ENCODE measurements at regions of chr10 and their contacts with region 1.

Region 1: DNA sequence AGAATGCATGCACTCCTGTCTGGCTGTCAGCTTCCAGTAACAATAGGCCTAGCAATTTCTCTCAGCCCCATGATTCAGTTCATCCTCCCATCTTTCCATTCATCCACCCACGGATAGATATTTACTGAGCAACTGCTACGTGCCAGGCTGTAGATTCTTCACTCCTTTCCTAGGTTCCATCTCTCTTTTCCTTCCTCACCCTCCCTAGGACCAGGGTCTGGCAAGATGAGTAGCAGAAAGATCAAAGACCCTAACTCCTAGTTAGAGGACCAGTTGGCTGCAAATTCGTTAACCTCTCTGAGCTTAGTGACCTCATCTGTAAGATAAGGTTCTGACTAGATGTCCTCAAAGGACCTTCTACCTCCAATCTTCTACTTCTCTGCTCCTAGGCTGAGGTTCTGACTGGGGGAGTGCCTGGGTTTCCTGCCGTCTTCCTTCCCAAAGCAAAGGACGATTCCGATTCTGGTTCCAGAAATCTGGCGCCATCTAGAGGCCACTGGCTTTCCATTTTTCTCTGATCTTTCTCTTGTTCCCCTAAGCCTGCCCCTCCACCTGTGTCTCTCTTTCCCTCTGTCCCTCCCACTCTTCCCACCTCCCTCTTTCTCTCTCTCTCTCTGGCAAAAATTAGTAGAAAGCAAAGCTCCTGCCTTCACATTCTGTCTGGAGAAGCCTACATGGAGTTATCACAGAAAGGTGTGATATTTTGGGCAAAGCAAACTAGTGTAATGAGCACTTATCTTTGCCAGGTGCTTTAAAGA is 26.2 kb downstream of the TBATA start:
- DNase-seq: peak; percentile 45
- H3K4me3 Mint-ChIP-seq: no peak overlapping the region
- H3K27ac Mint-ChIP-seq: no peak overlapping the region
- H3K4me1 Mint-ChIP-seq: peaks cover 6% of the 10 kb centered on the region
- H3K27me3 Mint-ChIP-seq: no peaks in the 10 kb centered on the region

Region 2: DNA sequence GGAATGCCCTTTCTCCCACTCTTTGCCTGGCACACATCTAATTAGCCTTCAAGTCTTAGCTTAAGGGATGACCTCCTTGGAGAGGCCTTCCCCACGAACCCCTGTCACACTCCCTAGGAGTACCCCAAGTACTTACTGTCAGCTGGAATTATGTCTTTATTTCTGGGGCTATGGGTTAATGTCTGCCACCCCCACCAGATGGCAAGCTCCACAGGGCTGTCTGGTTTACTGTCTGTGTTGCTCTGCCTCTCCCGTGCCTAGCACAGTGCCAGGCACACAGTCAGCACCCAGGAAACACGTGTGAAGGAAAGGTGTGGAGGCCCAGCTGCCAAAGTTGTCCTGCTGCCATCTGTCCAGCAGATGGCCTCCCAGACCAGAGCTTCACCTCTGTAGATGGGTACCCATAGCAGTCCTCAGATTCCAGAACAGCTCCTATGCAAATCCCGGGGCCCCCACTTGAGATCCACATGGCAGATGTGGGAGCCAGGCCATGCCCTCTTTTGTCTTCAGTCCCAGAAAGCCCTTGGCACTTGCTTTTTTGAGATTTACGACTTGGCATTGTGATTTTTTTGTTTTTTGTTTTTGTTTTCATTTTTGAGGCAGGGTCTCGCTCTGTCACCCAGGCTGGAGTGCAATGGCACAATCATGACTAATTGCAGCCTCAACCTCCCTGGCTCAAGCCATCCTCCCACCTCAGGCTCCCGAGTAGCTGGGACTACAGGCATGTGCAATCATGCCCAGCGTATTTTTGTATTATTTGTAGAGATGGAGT is 297.5 kb before region 1 on chr10:
- intact Hi-C with region 1: loop called (anchors 10 kb)
- DNase-seq: no peak
- H3K4me3 Mint-ChIP-seq: no peak overlapping the region
- H3K27ac Mint-ChIP-seq: no peak overlapping the region
- H3K4me1 Mint-ChIP-seq: no peaks in the 10 kb centered on the region
- H3K27me3 Mint-ChIP-seq: peaks cover 38% of the 10 kb centered on the region

Region 3: DNA sequence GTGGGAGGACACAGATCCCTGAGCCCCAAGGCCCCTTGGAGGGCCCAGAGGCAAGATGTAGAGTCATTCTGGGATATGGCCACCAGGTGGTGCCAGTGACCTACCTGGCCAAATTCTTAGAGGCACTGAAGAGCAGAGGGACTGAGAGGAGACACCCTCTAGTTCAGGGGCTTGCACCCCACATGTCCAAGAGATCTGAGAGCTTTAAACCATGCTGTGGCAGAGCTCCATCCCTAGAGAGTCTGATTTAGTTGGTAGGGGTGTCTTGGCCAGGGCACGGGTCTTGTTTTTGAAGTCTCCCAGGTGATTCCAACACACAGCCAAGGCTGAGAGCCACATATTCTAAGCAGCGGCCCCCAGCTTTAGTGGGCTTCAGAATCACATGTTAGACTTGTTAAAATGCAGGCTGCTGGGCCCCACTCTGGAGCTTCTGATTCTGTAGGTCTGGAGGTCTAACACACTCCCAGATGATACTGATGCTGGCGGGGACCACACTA is 208.9 kb before region 1 on chr10:
- intact Hi-C with region 1: loop called (anchors 1 kb)
- DNase-seq: peak; percentile 56
- H3K4me3 Mint-ChIP-seq: no peak overlapping the region
- H3K27ac Mint-ChIP-seq: no peak overlapping the region
- H3K4me1 Mint-ChIP-seq: no peaks in the 10 kb centered on the region
- H3K27me3 Mint-ChIP-seq: no peaks in the 10 kb centered on the region

Region 4: DNA sequence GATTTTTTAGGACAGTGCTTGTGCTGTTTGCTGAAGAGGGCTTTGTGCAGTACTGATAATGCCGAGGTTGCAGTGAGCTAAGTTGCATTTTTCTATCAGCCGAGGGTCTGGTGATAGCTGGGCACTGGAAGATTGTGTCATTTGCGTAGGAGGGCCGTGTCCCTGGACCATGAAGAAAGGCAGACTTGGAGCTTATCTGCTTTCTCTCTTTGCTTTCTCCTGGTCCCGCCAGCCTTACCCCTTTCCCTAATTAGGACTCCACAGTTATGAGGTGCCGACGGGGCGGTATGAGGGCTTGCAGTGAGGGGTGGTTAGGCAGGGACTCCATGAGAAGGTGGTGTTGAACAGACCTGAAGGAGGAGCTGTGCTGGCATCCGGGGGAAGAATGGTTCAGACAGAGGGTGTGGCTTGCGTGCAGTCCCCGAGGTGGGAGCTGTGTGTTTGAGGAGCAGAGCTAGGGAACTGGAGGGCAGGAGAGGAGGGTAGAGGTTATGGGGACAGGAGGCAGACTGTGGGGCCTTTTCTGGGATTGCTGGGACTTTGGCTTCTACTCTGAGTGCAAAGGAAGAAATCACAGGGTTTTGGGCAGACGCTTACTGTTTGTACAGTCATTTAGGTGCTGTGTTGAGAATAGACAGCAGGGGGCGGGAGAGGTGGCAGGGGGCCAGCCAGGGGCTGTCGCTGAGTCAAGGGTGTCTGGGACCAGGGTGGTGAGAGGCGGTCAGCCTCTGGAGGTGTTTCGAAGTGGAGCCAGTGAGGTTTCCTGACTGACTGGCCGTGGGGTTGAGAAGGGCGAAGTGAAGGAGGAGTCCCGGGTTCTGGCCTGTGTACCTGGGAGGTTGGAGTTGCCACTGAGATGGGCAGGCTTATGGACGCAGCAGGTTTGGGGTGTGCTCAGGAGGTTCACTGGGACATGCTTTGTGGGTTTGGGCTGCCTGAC is 199.8 kb before region 1 on chr10:
- intact Hi-C with region 1: loop called (anchors 1 kb)
- DNase-seq: peak; percentile 48
- H3K4me3 Mint-ChIP-seq: peak overlapping the region; percentile 59
- H3K27ac Mint-ChIP-seq: peak overlapping the region; percentile 19
- H3K4me1 Mint-ChIP-seq: peaks cover 17% of the 10 kb centered on the region
- H3K27me3 Mint-ChIP-seq: peaks cover 11% of the 10 kb centered on the region

Region 5: GRCh38 chr10:70619271-70620019 is 139.5 kb before region 1 on chr10:
- intact Hi-C with region 1: loop called (anchors 2 kb)
- DNase-seq: no peak
- H3K4me3 Mint-ChIP-seq: no peak overlapping the region
- H3K27ac Mint-ChIP-seq: no peak overlapping the region
- H3K4me1 Mint-ChIP-seq: peaks cover 31% of the 10 kb centered on the region
- H3K27me3 Mint-ChIP-seq: no peaks in the 10 kb centered on the region